AG04450 (cell line): ENCODE measurements at regions of chr12 and their contacts with region 1.

Region 1: GRCh38 chr12:115998119-115998633 is 279.3 kb downstream of the MED13L start:
- DNase-seq: peak; percentile 27
- H3K4me3 ChIP-seq: no peak overlapping the region
- H3K27ac ChIP-seq: no peak overlapping the region
- H3K27me3 ChIP-seq: no peaks in the 10 kb centered on the region
- CTCF ChIP-seq: peak; percentile 66

Region 2: GRCh38 chr12:115983226-115983798 is 14.9 kb before region 1 on chr12:
- CTCF ChIA-PET with region 1: interaction called, 35 read pairs
- POLR2A ChIA-PET with region 1: no interaction called
- DNase-seq: no peak
- H3K4me3 ChIP-seq: no peak overlapping the region
- H3K27ac ChIP-seq: no peak overlapping the region
- H3K27me3 ChIP-seq: no peaks in the 10 kb centered on the region
- CTCF ChIP-seq: peak; percentile 33

Region 3: GRCh38 chr12:116708826-116709756 is 710.9 kb after region 1 on chr12:
- CTCF ChIA-PET with region 1: interaction called, 10 read pairs
- POLR2A ChIA-PET with region 1: no interaction called
- DNase-seq: no peak
- H3K4me3 ChIP-seq: no peak overlapping the region
- H3K27ac ChIP-seq: no peak overlapping the region
- H3K27me3 ChIP-seq: no peaks in the 10 kb centered on the region
- CTCF ChIP-seq: peak; percentile 40